ENCODE measurements at regions of chr6 and their contacts with region 1.

Region 1: DNA sequence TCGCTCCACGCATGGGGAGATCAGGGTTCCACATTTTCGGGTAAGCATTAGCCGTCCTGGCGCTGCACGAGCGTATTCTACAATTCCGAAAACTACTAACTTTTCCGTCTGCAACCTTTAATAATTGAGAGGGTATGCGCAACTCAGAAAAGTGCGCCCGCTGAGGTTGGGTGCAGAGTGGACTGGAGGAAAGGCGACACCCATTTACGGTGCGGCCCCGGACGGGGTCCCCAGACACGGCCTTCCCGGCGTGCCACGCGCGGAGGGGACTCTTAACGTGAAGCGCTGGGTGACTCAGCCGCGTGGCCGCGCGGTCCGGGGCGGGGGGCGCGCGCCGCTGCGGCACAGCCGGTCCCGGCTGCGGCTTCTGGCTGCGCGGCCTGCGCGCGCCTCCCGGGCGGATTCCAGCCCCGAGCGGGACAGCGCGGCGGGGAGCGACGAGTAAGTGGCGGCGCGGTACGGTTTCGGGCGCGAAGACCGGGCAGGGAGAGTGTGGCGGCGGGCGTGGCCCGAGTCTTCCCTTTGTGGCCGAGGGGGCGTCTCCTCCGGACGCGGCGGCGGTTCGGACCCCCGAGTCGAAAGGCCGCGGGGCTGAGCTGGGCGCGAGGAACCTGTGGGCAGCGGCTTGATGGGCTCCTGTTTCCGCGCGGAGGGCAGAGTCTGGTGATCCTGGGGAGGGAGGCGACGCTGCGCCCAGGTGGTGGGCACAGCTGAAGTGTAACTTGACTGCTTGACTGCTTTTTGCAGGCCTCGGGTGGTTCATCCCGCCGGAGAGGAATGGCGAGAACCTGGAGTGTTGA is at the starts of genes KCTD20 and PXT1:
- DNase-seq: peak; percentile 93
- H3K4me3 Mint-ChIP-seq: peak within 1 kb of the TSS; percentile 87
- H3K27ac Mint-ChIP-seq: peak within 1 kb of the TSS; percentile 98
- H3K4me1 Mint-ChIP-seq: peaks cover 41% of the 10 kb centered on the region
- H3K27me3 Mint-ChIP-seq: no peaks in the 10 kb centered on the region
- total RNA-seq, gene KCTD20: 30.5 to 32.8 TPM
- total RNA-seq, gene PXT1: 0.15 to 0.29 TPM

Region 2: DNA sequence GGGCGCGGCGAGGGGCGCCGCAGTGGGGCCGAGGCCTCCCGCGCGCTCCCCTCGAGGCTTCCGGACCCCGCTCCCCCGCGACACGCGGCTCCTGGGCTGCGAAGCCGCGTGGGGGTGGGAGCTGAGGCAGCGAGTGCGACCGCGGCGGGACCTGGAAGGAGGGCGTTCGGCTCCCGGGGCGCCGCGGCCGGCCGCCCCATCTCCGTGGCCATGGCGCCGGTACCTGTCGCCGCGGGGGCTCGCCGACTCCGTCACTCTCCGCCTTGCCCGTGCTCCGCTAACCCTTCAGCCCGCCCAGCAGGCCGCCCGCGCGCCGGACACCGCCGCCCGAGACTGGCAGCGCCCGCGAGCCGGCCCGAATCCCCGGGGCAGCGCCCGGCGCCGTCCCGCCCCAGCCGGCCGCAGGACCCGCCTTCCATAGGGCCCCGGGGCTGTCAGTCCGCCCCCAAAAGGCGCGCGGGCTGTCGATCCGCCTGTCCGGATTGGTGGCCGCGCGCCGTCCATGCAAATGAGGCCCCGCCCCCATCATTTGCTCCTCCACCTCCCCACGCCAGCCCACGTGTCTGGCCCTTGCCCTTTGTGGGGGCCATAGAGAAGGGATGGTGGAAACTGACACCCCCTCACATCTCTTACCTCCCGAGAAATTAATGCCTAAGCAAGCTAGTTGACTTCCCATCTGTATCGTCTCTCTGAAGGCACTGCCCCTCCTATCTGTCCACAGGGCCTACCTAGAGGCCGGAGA is 754.1 kb before region 1 on chr6 and contains the start of gene FKBP5:
- CTCF ChIA-PET with region 1: no interaction called
- intact Hi-C with region 1: no loop called
- DNase-seq: peak; percentile 92
- H3K4me3 Mint-ChIP-seq: peak within 1 kb of the TSS; percentile 97
- H3K27ac Mint-ChIP-seq: peak within 1 kb of the TSS; percentile 94
- H3K4me1 Mint-ChIP-seq: peaks cover 16% of the 10 kb centered on the region
- H3K27me3 Mint-ChIP-seq: no peaks in the 10 kb centered on the region
- total RNA-seq, gene FKBP5: 202 to 208 TPM

Region 3: GRCh38 chr6:35719830-35720733 is 722.8 kb before region 1 on chr6:
- CTCF ChIA-PET with region 1: no interaction called
- intact Hi-C with region 1: loop called (anchors 5 kb)
- DNase-seq: peak; percentile 84
- H3K4me3 Mint-ChIP-seq: peak overlapping the region; percentile 80
- H3K27ac Mint-ChIP-seq: peak overlapping the region; percentile 91
- H3K4me1 Mint-ChIP-seq: peaks cover 74% of the 10 kb centered on the region
- H3K27me3 Mint-ChIP-seq: no peaks in the 10 kb centered on the region

Region 4: GRCh38 chr6:36131511-36132245 is 311.2 kb before region 1 on chr6:
- CTCF ChIA-PET with region 1: no interaction called
- intact Hi-C with region 1: loop called (anchors 5 kb)
- DNase-seq: peak; percentile 85
- H3K4me3 Mint-ChIP-seq: peak overlapping the region; percentile 83
- H3K27ac Mint-ChIP-seq: peak overlapping the region; percentile 93
- H3K4me1 Mint-ChIP-seq: peaks cover 41% of the 10 kb centered on the region
- H3K27me3 Mint-ChIP-seq: no peaks in the 10 kb centered on the region

Region 5: GRCh38 chr6:36423101-36423824 is 19.6 kb before region 1 on chr6:
- CTCF ChIA-PET with region 1: interaction called, 3 read pairs
- intact Hi-C with region 1: loop called (anchors 1 kb)
- DNase-seq: peak; percentile 99
- H3K4me3 Mint-ChIP-seq: peak overlapping the region; percentile 89
- H3K27ac Mint-ChIP-seq: peak overlapping the region; percentile 95
- H3K4me1 Mint-ChIP-seq: peaks cover 15% of the 10 kb centered on the region
- H3K27me3 Mint-ChIP-seq: no peaks in the 10 kb centered on the region

Region 6: DNA sequence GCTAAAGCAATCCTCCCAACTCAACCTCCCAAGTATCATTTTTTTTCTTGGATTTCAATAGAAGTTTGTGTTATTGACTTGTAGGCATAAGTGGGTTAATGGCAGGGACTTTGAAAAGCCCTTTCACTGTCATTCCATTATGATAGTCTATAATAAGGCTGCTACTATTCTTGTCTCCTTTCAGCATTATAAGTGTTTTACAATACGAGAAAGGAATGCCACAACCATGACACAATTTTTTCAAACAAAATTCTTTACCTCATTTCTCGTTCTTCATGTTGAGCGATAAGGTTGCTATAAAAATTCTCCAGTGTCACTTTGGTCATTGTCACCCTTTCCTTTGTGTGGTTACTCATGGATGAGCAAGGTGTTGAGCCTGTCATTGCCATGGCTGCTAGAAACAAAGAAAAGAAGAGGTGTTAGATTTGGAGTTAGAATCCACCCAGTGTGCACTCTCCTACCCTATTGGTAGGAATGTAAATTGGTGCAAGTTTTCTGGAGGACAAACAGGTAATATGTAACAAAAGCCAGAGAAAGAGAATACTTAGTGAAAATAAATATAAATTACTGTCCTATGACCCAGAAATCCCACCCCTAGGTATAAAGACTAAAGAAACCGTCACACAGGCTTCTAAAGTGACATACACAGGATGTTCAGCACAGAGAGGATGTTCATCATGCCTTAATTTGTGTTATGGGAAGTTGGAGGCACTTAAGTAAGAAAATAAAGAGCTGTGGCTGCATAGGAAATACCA is 97.1 kb after region 1 on chr6:
- CTCF ChIA-PET with region 1: no interaction called
- intact Hi-C with region 1: loop called (anchors 1 kb)
- DNase-seq: peak; percentile 44
- H3K4me3 Mint-ChIP-seq: peak overlapping the region; percentile 55
- H3K27ac Mint-ChIP-seq: peak overlapping the region; percentile 90
- H3K4me1 Mint-ChIP-seq: peaks cover 70% of the 10 kb centered on the region
- H3K27me3 Mint-ChIP-seq: no peaks in the 10 kb centered on the region

Region 7: DNA sequence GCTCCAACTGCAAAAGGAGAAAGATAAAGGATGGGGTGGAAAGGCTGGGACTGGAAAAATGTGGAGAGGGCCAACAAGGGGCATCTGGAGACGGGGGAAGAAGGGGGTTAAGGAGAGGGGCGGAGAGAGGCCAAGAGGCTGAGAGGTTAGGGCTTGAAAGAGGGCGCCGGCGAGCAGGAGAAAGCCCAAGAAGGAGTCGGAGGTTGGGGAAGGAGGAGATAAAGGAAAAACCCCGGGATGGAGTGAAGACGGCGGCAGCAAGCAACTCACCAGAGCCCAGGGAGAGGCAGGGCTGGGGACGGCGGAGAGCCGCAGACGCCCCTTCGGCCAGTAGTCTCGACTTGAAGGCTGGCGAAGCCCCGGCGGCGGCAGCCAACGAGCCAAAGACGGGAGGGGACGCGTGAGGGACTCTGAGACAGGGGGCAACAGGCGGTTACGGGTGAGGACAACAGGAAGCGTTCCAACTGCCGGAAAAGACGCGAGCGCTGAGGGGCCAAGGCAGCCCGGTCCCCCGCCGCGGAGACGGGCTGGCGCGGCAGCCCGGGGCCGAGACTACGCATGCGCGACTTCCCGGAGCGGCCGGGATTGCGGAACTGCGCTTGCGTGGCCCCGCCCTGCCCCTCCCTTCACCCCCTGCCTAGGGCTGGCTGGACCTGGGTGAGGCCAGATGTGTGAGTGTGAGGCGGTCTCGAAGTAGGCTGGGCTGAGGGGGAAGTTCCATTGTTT is 104.2 kb after region 1 on chr6 and contains the start of gene STK38:
- CTCF ChIA-PET with region 1: no interaction called
- intact Hi-C with region 1: loop called (anchors 2 kb)
- DNase-seq: peak; percentile 95
- H3K4me3 Mint-ChIP-seq: peak within 1 kb of the TSS; percentile 97
- H3K27ac Mint-ChIP-seq: peak within 1 kb of the TSS; percentile 97
- H3K4me1 Mint-ChIP-seq: peaks cover 39% of the 10 kb centered on the region
- H3K27me3 Mint-ChIP-seq: no peaks in the 10 kb centered on the region
- total RNA-seq, gene STK38: 23.6 to 24.4 TPM

Region 8: DNA sequence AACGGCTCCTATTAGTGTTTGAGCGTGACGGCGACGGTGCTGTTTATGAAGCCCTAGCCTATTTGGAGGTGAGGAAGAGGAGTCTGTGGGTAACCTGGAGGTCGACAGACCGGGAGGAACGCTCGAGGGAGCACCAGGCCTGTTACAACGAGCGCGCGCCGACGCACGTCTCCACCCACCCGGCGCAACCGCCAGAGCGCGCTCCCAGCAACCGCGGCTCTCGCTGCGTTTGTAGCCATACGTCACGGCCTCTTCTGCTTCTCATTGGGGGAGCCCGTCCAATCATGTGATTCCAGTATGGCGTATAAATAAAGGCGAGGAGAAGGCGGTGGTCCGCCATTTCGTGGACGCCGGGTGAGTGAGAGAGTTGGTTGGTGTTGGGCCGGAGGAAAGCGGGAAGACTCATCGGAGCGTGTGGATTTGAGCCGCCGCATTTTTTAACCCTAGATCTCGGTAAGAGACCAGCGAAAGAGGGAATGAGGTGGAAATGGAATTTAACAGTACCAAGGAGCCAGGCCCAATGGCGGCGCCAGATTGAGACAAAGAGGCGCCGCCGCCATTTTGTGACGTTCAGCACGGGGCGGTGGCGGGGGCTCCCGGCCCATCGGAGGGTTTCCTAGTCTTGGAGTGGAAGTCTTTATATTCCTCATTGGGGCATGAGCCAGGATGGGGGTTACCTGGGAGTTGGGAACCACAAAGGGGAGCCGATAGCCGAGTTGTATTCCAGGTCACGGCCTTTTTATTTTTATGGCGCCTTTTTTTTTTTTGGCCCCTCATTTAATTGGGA is 151.4 kb after region 1 on chr6 and contains the start of gene SRSF3:
- CTCF ChIA-PET with region 1: interaction called, 3 read pairs
- intact Hi-C with region 1: loop called (anchors 1 kb)
- DNase-seq: peak; percentile 98
- H3K4me3 Mint-ChIP-seq: peak within 1 kb of the TSS; percentile 92
- H3K27ac Mint-ChIP-seq: peak within 1 kb of the TSS; percentile 98
- H3K4me1 Mint-ChIP-seq: peaks cover 31% of the 10 kb centered on the region
- H3K27me3 Mint-ChIP-seq: no peaks in the 10 kb centered on the region
- total RNA-seq, gene SRSF3: 250 to 269 TPM

Measured in activated naive CD4-positive, alpha-beta T cell treated with anti-CD3 and anti-CD28 coated beads for 36 hours (primary cell).